HCT116 (cell line): ENCODE measurements at regions of chr1 and their contacts with region 1.

Region 1: DNA sequence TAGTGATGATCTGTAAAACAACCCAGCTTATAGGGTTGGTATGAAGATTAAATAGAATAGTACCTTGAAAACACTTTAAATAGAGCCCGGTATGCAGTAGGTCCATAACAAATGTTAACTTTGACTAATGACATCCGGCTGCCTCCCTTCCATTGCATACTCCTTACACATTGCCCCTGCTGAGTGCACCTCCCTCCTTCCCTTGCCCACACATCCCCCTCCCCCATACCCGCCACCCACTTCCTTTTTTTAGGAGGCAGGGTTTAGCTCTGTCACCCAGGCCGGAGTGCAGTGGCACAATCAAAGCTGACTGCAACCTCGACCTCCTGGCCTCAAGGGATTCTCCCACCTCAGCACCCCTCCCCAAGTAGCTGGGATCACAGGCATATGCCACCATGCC is 24.4 kb upstream of the ZC3H12A start:
- DNase-seq: no peak
- ATAC-seq: no peak
- H3K4me3 ChIP-seq: no peak overlapping the region
- H3K27ac ChIP-seq: no peak overlapping the region
- H3K4me1 ChIP-seq: peaks cover 5 to 27% of the 10 kb centered on the region in 2 experiments; a peak in 3 of 4 replicates
- H3K27me3 ChIP-seq: no peaks in the 10 kb centered on the region
- CTCF ChIP-seq: no peak
- POLR2A ChIP-seq: no peak
- RAD21 ChIP-seq: no peak

Region 2: GRCh38 chr1:37423810-37424209 is 26.1 kb before region 1 on chr1:
- CTCF ChIA-PET with region 1: no interaction called
- POLR2A ChIA-PET with region 1: no interaction called
- RAD21 ChIA-PET with region 1: no interaction called
- intact Hi-C with region 1: no loop called
- DNase-seq: no peak
- ATAC-seq: peak; percentile 64
- H3K4me3 ChIP-seq: peak overlapping the region in 1 of 2 experiments; percentile 2; a peak in 2 of 4 replicates
- H3K27ac ChIP-seq: no peak overlapping the region
- H3K4me1 ChIP-seq: no peaks in the 10 kb centered on the region
- H3K27me3 ChIP-seq: peaks cover 18% of the 10 kb centered on the region
- CTCF ChIP-seq: no peak
- POLR2A ChIP-seq: peak; percentile 46
- RAD21 ChIP-seq: no peak

Region 3: DNA sequence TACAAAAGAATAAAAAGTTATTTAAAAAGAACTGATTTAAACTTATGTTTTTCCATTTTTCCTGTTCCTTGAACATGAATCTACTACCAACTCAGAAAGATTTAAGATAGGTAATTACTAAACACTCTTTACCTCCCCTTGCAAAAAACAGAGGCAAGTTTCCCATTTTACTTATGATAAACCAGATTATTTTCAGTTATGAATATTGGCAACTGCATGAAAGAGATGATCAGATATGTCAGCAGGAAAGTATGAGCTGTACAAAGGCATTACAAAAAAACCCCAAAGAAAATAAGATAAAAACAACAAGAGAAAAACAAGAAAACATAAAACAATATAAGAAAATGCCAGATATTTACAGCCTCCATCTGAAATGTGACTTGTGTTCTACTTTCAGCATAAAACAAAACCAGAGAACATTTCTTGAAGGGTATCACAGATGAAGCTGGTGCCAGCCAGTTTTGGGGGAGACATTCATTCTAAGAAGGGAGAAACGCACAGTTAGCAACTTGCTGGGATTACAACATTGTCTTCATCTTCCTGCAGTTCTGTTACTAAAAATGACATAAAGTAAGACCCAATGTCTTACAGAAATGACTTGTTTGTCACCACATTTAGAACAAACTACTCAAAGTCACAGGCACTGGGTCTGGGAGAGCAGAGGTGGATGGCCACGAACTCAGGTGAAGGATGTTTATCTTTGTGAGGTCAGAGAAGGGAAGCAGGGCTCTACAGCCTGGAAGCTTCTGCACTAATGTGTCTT is 43.6 kb after region 1 on chr1:
- CTCF ChIA-PET with region 1: no interaction called
- POLR2A ChIA-PET with region 1: no interaction called
- RAD21 ChIA-PET with region 1: no interaction called
- intact Hi-C with region 1: no loop called
- DNase-seq: no peak
- ATAC-seq: no peak
- H3K4me3 ChIP-seq: no peak overlapping the region
- H3K27ac ChIP-seq: no peak overlapping the region
- H3K4me1 ChIP-seq: 0 out of 4 replicates have a peak, but pooled peaks cover 0 to 3% of the 10 kb centered on the region in 2 experiments
- H3K27me3 ChIP-seq: no peaks in the 10 kb centered on the region
- CTCF ChIP-seq: no peak
- POLR2A ChIP-seq: no peak
- RAD21 ChIP-seq: no peak

Region 4: DNA sequence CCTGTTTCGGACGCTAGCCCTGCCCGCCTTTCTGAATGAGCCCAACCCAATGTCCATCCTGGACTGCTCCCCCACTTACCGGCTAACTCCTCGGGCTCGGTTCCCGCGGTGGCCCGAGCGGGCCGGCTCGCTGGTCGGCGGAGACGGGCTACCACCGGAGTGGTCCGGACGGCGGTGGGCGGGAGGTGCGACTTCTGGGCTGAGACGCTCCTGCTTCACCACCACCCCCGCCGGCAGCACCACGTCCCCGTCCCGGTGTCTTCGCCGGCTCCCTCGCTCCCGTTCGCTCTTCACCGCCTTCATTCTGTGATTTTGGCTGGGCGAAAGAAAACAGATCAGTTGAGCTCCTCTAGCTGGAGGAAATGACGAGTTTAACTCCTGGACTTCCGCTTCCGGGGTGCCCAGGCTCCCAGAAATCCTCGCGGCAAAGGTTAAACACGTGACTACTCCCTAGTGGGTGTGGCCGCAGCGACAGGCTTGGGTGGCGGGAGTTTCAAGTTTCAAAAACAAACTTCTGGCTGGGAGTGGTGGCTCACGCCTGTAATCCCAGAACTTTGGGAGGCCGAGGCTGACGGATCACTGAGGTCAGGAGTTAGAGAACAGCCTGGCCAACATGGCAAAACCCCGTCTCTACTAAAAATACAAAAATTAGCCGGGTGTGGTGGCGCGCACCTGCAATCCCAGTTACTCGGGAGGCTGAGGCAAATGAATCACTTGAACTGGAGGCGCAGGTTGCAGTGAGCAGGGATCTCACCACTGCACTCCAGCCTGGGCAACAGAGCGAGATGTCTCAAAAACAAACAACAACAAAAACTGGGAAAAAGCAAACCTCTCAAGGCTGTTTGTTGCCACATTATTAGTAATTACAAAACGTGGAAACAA is 104.2 kb after region 1 on chr1 and contains the start of gene SNIP1:
- CTCF ChIA-PET with region 1: no interaction called
- POLR2A ChIA-PET with region 1: no interaction called
- RAD21 ChIA-PET with region 1: no interaction called
- intact Hi-C with region 1: loop called (anchors 5 kb)
- DNase-seq: peak; percentile 85
- ATAC-seq: peak; percentile 88
- H3K4me3 ChIP-seq: peak within 1 kb of the TSS; percentile 98 to 99
- H3K27ac ChIP-seq: peak within 1 kb of the TSS; percentile 71
- H3K4me1 ChIP-seq: peaks cover 15 to 28% of the 10 kb centered on the region in 2 experiments
- H3K27me3 ChIP-seq: no peaks in the 10 kb centered on the region
- CTCF ChIP-seq: no peak
- POLR2A ChIP-seq: peak; percentile 36
- RAD21 ChIP-seq: no peak
- total RNA-seq, gene SNIP1: 18.8 TPM

Region 5: GRCh38 chr1:37734629-37735591 is 285.0 kb after region 1 on chr1:
- CTCF ChIA-PET with region 1: no interaction called
- POLR2A ChIA-PET with region 1: no interaction called
- RAD21 ChIA-PET with region 1: no interaction called
- intact Hi-C with region 1: no loop called
- DNase-seq: no peak
- ATAC-seq: peak; percentile 57
- H3K4me3 ChIP-seq: no peak overlapping the region
- H3K27ac ChIP-seq: no peak overlapping the region
- H3K4me1 ChIP-seq: peaks cover 12 to 19% of the 10 kb centered on the region in 2 experiments
- H3K27me3 ChIP-seq: no peaks in the 10 kb centered on the region
- CTCF ChIP-seq: no peak
- POLR2A ChIP-seq: no peak
- RAD21 ChIP-seq: no peak

Region 6: GRCh38 chr1:38360807-38361206 is 910.9 kb after region 1 on chr1:
- CTCF ChIA-PET with region 1: no interaction called
- POLR2A ChIA-PET with region 1: no interaction called
- RAD21 ChIA-PET with region 1: no interaction called
- intact Hi-C with region 1: no loop called
- DNase-seq: no peak
- ATAC-seq: no peak
- H3K4me3 ChIP-seq: no peak overlapping the region
- H3K27ac ChIP-seq: no peak overlapping the region
- H3K4me1 ChIP-seq: no peaks in the 10 kb centered on the region
- H3K27me3 ChIP-seq: peaks cover 26% of the 10 kb centered on the region
- CTCF ChIP-seq: 0 out of 6 replicates have a peak, but pooled peaks of 1 of the 3 experiments have one; percentile 11
- POLR2A ChIP-seq: no peak
- RAD21 ChIP-seq: peak; percentile 17; the same call in 1 of the 2 replicates